Activated CD4-positive, alpha-beta memory T cell treated with anti-CD3 and anti-CD28 coated beads for 36 hours (primary cell): ENCODE measurements at regions of chr10 and their contacts with region 1.

Region 1: GRCh38 chr10:23448802-23449570 is 10.1 kb downstream of the OTUD1 start:
- DNase-seq: no peak
- H3K4me3 Mint-ChIP-seq: no peak overlapping the region
- H3K27ac Mint-ChIP-seq: peak overlapping the region; percentile 82
- H3K4me1 Mint-ChIP-seq: peaks cover 34% of the 10 kb centered on the region
- H3K27me3 Mint-ChIP-seq: no peaks in the 10 kb centered on the region

Region 2: GRCh38 chr10:23095404-23095965 is 353.5 kb before region 1 on chr10 and contains the start of gene MSRB2:
- CTCF ChIA-PET with region 1: no interaction called
- POLR2A ChIA-PET with region 1: no interaction called
- intact Hi-C with region 1: loop called (anchors 5 kb)
- DNase-seq: peak; percentile 87
- H3K4me3 Mint-ChIP-seq: peak within 1 kb of the TSS; percentile 94
- H3K27ac Mint-ChIP-seq: peak within 1 kb of the TSS; percentile 88
- H3K4me1 Mint-ChIP-seq: peaks cover 38% of the 10 kb centered on the region
- H3K27me3 Mint-ChIP-seq: no peaks in the 10 kb centered on the region
- total RNA-seq, gene MSRB2: 9.4 to 11.1 TPM

Region 3: DNA sequence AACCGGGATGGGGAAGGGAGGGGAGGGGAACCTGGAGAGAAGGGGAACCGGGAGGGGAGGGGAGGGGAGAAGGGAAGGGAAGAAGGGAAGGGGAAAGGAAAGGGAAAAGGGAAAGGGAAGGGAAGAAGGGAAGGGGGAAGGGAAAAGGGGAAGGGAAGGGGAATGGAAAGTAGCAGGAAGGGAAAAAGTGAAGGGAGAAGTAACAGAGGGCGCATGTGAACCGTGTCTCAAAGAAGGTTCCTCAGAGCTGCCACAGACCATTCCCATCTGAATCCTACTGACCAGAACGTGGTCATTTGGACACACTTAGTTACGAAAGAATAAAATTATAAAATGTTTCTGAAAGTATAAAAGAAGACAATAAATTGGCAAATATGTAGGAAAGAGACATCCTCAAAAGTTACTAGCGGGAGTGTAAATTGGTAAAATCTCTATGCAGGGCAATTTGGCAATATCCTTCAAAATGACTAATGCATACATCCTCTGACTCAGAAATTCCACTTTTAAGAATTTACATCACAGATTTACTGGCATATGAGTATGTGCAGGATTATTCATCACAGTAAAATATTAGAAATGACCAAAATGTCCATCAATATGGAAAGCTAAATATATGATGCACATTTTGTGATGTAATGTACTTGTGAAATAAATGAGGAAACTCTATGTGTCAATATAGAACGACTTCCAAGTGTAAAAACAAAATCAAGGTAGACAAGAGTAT is 117.3 kb before region 1 on chr10:
- CTCF ChIA-PET with region 1: interaction called, 4 read pairs
- POLR2A ChIA-PET with region 1: interaction called, 4 read pairs
- intact Hi-C with region 1: loop called (anchors 1 kb)
- DNase-seq: no peak
- H3K4me3 Mint-ChIP-seq: peak overlapping the region; percentile 9
- H3K27ac Mint-ChIP-seq: peak overlapping the region; percentile 50
- H3K4me1 Mint-ChIP-seq: peaks cover 34% of the 10 kb centered on the region
- H3K27me3 Mint-ChIP-seq: no peaks in the 10 kb centered on the region

Region 4: GRCh38 chr10:23362879-23363792 is 85.8 kb before region 1 on chr10:
- CTCF ChIA-PET with region 1: no interaction called
- POLR2A ChIA-PET with region 1: interaction called, 5 read pairs
- intact Hi-C with region 1: loop called (anchors 1 kb)
- DNase-seq: peak; percentile 68
- H3K4me3 Mint-ChIP-seq: peak overlapping the region; percentile 63
- H3K27ac Mint-ChIP-seq: peak overlapping the region; percentile 89
- H3K4me1 Mint-ChIP-seq: peaks cover 61% of the 10 kb centered on the region
- H3K27me3 Mint-ChIP-seq: peaks cover 3% of the 10 kb centered on the region

Region 5: GRCh38 chr10:23694446-23694920 is 245.5 kb after region 1 on chr10:
- CTCF ChIA-PET with region 1: no interaction called
- POLR2A ChIA-PET with region 1: no interaction called
- intact Hi-C with region 1: no loop called
- DNase-seq: no peak
- H3K4me3 Mint-ChIP-seq: no peak overlapping the region
- H3K27ac Mint-ChIP-seq: no peak overlapping the region
- H3K4me1 Mint-ChIP-seq: peaks cover 3% of the 10 kb centered on the region
- H3K27me3 Mint-ChIP-seq: peaks cover 43% of the 10 kb centered on the region